ENCODE measurements at regions of chr10 and their contacts with region 1.

Region 1: DNA sequence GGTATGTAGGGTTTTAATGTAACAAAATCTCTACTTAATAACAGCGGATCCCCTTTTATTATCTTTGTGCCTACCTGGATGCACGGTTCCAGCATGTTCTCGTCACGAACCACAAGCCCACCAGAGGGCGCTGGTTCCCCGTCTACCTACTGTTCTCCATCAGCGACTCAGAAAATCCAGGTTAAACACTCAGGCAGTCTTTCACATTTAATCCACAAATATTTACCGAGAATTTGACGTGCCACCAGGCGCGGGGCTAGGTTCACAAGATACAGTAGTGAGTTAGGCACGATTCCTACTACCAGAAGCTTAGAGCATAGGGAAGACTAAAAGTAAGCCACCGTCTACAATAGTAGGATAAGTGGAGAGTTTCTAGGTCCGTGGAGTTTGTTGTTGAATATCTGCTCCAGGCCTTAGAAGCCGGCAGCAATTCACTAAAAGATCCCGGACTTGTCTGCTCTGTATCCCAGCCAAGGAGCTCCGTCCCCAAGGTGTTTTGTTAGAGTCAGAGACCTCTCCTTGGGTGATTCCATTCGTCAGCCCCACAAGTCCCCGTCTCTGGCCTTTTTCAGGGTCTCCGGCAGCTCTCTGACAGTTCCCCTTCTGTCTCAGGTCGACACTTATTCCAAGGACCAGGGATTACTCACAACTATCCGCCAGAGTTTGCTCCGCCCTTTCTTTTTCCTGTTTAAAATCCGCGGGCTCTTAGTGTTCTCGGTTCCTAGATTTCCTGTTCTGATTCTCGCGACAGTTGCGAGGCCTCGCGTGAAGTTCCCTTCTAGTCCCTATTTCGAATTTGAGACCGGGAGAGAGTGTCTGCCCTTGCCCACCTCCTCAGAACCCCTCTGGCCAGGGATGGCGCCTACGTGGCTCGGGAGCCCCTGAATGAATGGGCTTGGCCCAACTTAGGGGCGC is 1.5 kb upstream of the KAZALD1 start:
- DNase-seq: peak; percentile 97
- H3K4me3 Mint-ChIP-seq: peak overlapping the region; percentile 84
- H3K27ac Mint-ChIP-seq: peak overlapping the region; percentile 96
- H3K4me1 Mint-ChIP-seq: peaks cover 33% of the 10 kb centered on the region
- H3K27me3 Mint-ChIP-seq: peaks cover 26% of the 10 kb centered on the region

Region 2: DNA sequence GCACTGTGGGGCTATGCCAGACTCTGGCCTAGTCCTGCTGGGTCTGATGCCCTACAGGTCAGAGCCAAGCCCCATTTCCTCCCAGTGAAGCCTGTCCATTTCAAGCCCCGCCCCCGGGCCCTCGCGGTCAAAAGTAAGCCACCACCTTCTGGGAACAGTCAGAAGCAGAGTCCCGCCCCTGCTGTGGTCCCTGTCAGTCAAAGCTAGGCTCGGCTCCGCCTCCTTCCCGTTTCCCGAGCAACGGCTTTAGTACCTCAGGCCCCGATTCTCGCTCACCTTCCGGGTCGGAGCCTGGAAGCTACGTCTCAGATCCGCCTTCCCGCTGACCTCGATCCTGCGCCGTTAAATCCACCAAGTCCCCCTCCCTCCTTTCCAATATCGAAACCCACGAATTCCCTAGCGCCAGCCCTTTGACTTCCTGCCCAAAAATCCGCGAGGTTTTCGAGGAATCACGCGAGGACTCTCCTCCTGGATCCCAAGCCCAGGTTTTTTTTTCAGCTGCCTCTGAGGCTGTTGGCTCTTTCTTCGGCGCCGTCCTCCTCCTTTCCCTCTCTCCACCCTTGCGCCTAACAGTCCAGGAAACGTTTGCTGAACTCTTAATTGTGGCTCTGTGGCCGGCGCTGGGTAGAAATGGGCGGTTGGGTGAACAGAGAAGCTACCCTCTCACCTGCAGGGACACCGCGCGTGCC is 17.5 kb before region 1 on chr10:
- intact Hi-C with region 1: loop called (anchors 1 kb)
- DNase-seq: peak; percentile 96
- H3K4me3 Mint-ChIP-seq: peak overlapping the region; percentile 97
- H3K27ac Mint-ChIP-seq: peak overlapping the region; percentile 89
- H3K4me1 Mint-ChIP-seq: peaks cover 19% of the 10 kb centered on the region
- H3K27me3 Mint-ChIP-seq: peaks cover 32% of the 10 kb centered on the region

Region 3: GRCh38 chr10:101214446-101215396 is 154.4 kb after region 1 on chr10:
- intact Hi-C with region 1: no loop called
- DNase-seq: peak; percentile 90
- H3K4me3 Mint-ChIP-seq: peak overlapping the region; percentile 59
- H3K27ac Mint-ChIP-seq: peak overlapping the region; percentile 69
- H3K4me1 Mint-ChIP-seq: peaks cover 18% of the 10 kb centered on the region
- H3K27me3 Mint-ChIP-seq: peaks cover 79% of the 10 kb centered on the region

Region 4: DNA sequence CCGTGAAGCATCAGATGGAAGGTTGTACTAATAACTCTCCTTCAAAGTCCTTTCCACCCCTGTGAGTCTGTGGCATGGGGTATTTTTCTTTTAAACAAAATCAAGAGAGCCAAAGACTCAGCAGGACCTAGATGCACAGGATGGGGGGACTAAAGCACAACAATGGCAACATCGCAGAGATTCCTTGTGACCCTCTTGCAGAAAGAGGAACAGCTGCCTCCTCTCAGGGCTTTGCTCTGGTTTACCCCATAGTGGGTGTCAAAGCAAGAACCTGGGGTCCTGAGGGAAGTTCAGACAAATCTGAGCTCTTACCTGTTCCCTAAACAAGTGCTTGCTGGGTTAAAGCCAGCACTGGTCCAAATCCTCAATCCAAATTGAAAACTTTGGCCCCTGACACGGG is 676.4 kb after region 1 on chr10:
- intact Hi-C with region 1: no loop called
- DNase-seq: no peak
- H3K4me3 Mint-ChIP-seq: no peak overlapping the region
- H3K27ac Mint-ChIP-seq: no peak overlapping the region
- H3K4me1 Mint-ChIP-seq: no peaks in the 10 kb centered on the region
- H3K27me3 Mint-ChIP-seq: peaks cover 28% of the 10 kb centered on the region

Region 5: GRCh38 chr10:102064868-102065560 is 1004.7 kb after region 1 on chr10 and contains the start of gene HPS6:
- intact Hi-C with region 1: loop called (anchors 10 kb)
- DNase-seq: peak; percentile 97
- H3K4me3 Mint-ChIP-seq: peak within 1 kb of the TSS; percentile 87
- H3K27ac Mint-ChIP-seq: peak within 1 kb of the TSS; percentile 94
- H3K4me1 Mint-ChIP-seq: peaks cover 23% of the 10 kb centered on the region
- H3K27me3 Mint-ChIP-seq: no peaks in the 10 kb centered on the region
- total RNA-seq, gene HPS6: 22.7 and 25.8 TPM in 2 replicates